MCF 10A (cell line): ENCODE measurements at regions of chr6 and their contacts with region 1.

Region 1: DNA sequence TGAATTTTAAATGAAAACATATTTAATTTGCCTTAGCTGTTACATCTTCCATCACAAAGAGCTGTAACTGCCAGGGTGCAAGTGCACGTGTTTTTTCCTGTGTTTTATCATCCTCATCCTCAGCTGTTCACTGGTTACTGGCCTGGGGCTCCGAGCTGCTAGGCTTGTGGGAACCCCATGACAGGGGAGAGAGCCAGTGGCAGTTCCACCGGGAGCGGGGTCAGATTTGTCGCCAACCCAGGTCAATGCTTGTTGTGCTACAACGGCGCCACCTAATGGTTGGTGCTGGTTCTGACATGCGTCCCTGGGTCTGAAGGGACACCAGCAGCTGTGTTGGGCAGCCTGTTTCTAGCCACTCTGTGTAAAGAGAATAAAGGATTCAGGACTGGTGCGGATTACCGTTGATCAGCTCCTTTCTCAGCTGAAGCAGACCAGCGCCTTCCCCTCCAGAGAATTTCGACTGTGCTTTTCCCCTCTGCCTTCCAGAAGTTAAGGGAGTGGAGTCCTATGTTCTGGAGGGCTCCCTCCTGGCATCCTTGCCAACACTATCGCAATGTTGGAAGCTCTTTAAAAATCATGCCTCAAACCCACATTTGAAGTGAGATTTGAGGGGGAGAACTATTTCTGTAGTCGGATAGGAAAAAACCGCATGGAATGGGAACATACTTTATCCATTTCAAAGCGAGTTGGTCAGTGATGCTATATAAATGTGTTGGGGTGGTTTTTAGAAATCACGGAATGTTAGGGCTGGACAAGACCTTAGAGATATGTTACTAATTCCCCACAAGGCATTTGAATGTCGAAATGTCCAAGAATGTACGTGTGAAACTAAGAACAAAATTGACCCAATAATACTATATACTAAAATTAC is 32.1 kb downstream of the SUMO4 start:
- DNase-seq: peak; percentile 87
- H3K4me3 Mint-ChIP-seq: no peak overlapping the region
- H3K27ac Mint-ChIP-seq: no peak overlapping the region
- H3K4me1 Mint-ChIP-seq: peaks cover 4% of the 10 kb centered on the region
- H3K27me3 Mint-ChIP-seq: no peaks in the 10 kb centered on the region
- CTCF ChIP-seq: peak; percentile 92

Region 2: GRCh38 chr6:148578245-148578732 is 853.9 kb before region 1 on chr6:
- CTCF ChIA-PET with region 1: interaction called, 5 read pairs
- POLR2A ChIA-PET with region 1: no interaction called
- intact Hi-C with region 1: loop called (anchors 2 kb)
- DNase-seq: peak; percentile 79
- H3K4me3 Mint-ChIP-seq: no peak overlapping the region
- H3K27ac Mint-ChIP-seq: no peak overlapping the region
- H3K4me1 Mint-ChIP-seq: no peaks in the 10 kb centered on the region
- H3K27me3 Mint-ChIP-seq: no peaks in the 10 kb centered on the region
- CTCF ChIP-seq: peak; percentile 83

Region 3: DNA sequence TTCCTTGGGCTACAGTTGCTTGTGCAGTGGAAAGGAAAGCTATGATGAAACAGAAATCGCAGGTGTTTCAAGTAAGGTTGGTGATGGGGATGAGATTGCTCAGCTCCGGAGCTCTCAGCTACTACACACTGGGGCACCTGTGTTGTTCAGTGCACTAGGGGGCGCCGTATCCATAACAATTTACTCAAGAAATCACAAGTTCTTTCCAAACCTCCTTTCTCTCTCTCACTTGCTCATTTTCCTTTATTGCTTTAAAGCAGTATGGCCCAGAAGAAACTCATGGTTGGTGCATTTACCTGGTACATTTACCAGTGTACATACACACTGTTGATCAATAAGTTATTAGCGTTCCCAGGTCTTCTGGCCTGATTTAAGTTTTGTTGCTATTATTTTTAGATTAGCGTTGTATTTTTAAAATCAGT is 349.8 kb before region 1 on chr6:
- CTCF ChIA-PET with region 1: interaction called, 50 read pairs
- POLR2A ChIA-PET with region 1: interaction called, 6 read pairs
- intact Hi-C with region 1: loop called (anchors 1 kb)
- DNase-seq: peak; percentile 78
- H3K4me3 Mint-ChIP-seq: no peak overlapping the region
- H3K27ac Mint-ChIP-seq: no peak overlapping the region
- H3K4me1 Mint-ChIP-seq: peaks cover 11% of the 10 kb centered on the region
- H3K27me3 Mint-ChIP-seq: no peaks in the 10 kb centered on the region
- CTCF ChIP-seq: peak; percentile 72

Region 4: GRCh38 chr6:149190224-149190831 is 241.8 kb before region 1 on chr6:
- CTCF ChIA-PET with region 1: interaction called, 4 read pairs
- POLR2A ChIA-PET with region 1: no interaction called
- intact Hi-C with region 1: loop called (anchors 5 kb)
- DNase-seq: peak; percentile 70
- H3K4me3 Mint-ChIP-seq: no peak overlapping the region
- H3K27ac Mint-ChIP-seq: no peak overlapping the region
- H3K4me1 Mint-ChIP-seq: no peaks in the 10 kb centered on the region
- H3K27me3 Mint-ChIP-seq: no peaks in the 10 kb centered on the region
- CTCF ChIP-seq: no peak

Region 5: DNA sequence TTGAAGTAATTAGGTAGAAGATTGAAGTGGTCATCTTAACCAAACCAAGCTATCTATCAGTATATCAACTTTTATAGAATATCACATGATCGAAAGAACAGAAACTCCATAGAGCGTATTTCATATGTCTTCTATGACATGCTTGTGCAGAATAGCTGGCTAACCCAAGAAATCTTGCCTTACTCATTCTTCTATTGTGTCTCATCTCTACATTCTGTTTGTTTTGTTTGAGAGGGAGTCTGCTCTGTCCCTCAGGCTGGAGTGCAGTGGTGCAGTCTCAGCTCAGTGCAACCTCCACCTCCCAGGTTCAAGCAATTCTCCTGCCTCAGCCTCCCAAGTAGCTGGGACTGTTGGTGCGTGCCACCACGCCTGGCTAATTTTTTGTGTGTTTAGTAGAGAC is 104.1 kb before region 1 on chr6:
- CTCF ChIA-PET with region 1: interaction called, 10 read pairs
- POLR2A ChIA-PET with region 1: no interaction called
- intact Hi-C with region 1: no loop called
- DNase-seq: no peak
- H3K4me3 Mint-ChIP-seq: no peak overlapping the region
- H3K27ac Mint-ChIP-seq: no peak overlapping the region
- H3K4me1 Mint-ChIP-seq: peaks cover 51% of the 10 kb centered on the region
- H3K27me3 Mint-ChIP-seq: no peaks in the 10 kb centered on the region
- CTCF ChIP-seq: no peak

Region 6: DNA sequence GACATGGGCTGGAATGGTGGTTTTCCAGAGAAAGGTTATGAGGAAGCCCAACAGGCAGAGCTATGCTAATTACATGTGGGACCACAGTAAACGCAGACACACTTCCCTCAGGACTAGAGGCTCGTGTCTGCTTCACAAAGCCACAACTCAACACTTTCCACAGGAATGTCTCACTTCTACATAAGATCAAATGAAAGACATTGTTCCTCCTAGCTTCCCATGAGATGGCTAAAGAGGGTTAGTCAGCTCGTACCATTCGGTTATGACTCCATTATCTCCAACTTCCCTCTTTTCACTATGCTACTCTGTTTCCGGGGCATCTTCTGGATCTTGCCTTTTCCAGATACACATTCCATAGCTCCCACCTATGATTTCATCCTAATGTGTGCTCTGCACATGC is 81.8 kb after region 1 on chr6:
- CTCF ChIA-PET with region 1: interaction called, 11 read pairs
- POLR2A ChIA-PET with region 1: interaction called, 3 read pairs
- intact Hi-C with region 1: loop called (anchors 1 kb)
- DNase-seq: no peak
- H3K4me3 Mint-ChIP-seq: no peak overlapping the region
- H3K27ac Mint-ChIP-seq: no peak overlapping the region
- H3K4me1 Mint-ChIP-seq: peaks cover 6% of the 10 kb centered on the region
- H3K27me3 Mint-ChIP-seq: no peaks in the 10 kb centered on the region
- CTCF ChIP-seq: no peak